ENCODE measurements at regions of chr1 and their contacts with region 1.

Region 1: DNA sequence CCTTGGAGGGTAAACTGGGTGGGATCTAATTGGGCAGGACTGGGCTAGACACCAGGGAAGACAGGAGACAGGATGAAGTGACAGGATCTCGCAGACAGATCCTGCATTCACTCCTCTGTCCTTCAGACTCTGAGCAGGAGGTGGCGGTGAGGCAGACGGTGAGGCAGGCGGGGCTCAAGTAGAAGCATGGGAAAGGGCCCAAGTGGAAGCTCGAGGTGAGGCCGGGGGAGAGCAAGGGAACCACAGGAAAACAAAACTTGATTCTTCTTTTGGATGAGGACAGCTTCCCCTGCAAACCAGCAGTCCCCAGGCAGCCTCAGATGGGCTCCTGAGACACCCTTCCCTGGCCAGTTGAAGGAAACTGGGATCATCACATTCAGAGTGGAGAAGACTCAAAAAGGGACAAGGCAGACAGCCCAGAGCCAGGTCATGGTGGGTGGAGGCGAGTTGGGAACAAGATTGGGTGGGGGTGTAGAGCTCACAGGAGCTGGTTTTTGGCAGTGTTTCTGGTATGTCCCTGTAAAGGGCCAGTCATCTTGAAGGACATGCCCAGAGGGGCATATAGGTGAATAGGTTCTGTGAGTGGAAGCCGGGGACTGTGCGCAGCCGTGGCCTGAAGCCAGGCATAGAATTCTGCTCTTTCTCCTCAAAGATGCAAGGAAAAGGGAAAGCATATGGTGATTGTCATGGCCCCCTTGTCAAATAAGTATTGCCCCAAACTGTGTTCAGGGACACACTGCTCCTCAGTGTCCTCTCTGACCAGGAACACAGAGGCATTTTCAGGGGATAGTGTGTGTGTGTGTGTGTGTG is 18.0 kb downstream of the INKA2 start:
- DNase-seq: no peak
- H3K4me3 ChIP-seq: no peak overlapping the region
- H3K27ac ChIP-seq: no peak overlapping the region
- H3K4me1 ChIP-seq: peaks cover 8% of the 10 kb centered on the region
- H3K27me3 ChIP-seq: no peaks in the 10 kb centered on the region
- CTCF ChIP-seq: no peak
- POLR2A ChIP-seq: no peak

Region 2: GRCh38 chr1:111739194-111739924 is 18.2 kb after region 1 on chr1 and contains the start of gene INKA2:
- CTCF ChIA-PET with region 1: interaction called, 487 read pairs
- POLR2A ChIA-PET with region 1: interaction called, 3 read pairs
- dilution Hi-C with region 1: no loop called
- intact Hi-C with region 1: loop called (anchors 1 kb)
- DNase-seq: peak; percentile 89
- H3K4me3 ChIP-seq: peak within 1 kb of the TSS; percentile 50 to 68 (median 61)
- H3K27ac ChIP-seq: peak within 1 kb of the TSS; percentile 47
- H3K4me1 ChIP-seq: peaks cover 29% of the 10 kb centered on the region
- H3K27me3 ChIP-seq: peaks cover 4 to 6% of the 10 kb centered on the region in 2 experiments
- CTCF ChIP-seq: no peak
- POLR2A ChIP-seq: no peak
- total RNA-seq, gene INKA2: 5.3 and 7.8 TPM in 2 replicates

Measured in endothelial cell of umbilical vein (primary cell).